ENCODE measurements at regions of chr13 and their contacts with region 1.

Region 1: DNA sequence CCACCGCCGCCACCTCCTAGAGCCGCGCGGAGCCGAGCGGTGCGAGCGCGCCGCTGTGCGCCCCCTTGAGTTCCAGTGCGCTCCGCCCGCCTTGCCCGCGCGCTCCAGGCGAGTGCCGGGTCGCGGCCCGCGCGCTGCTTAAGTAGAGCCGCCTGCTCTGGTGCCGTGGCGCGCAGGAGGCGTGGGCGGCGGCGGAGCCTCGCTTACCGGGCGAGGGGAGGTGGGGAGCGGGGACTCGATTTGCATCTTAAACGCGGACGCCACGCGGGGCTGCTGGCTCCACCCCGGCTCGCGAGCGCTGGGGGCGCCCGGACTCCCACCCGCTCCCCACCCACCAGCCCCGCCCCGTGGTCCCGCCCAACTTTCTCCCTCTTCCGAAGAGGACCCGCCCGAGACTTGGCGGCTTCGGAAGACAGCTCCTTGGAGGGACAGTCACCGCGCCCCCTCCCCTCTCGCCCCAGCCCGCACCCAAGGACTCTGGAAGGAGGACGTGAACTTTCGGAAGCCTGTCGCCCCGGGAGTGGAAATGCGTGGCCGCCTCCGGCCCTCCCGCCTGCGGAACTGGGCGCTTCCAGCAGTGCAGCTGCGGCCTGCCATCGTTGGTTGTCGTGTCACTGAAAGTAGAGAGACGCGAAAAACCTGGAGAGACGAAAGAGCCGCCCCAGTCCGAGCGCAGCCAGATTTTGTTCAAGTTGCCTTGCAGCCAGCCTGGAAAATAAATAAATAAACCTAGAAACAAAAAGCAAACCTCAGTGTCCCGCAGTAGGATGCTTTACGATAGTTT is at the start of gene KCTD12:
- DNase-seq: peak; percentile 49
- H3K4me3 Mint-ChIP-seq: peak within 1 kb of the TSS; percentile 62
- H3K27ac Mint-ChIP-seq: peak within 1 kb of the TSS; percentile 47
- H3K4me1 Mint-ChIP-seq: no peaks in the 10 kb centered on the region
- H3K27me3 Mint-ChIP-seq: no peaks in the 10 kb centered on the region
- CTCF ChIP-seq: no peak
- total RNA-seq, gene KCTD12: 2.8 and 3.7 TPM in 2 replicates

Region 2: DNA sequence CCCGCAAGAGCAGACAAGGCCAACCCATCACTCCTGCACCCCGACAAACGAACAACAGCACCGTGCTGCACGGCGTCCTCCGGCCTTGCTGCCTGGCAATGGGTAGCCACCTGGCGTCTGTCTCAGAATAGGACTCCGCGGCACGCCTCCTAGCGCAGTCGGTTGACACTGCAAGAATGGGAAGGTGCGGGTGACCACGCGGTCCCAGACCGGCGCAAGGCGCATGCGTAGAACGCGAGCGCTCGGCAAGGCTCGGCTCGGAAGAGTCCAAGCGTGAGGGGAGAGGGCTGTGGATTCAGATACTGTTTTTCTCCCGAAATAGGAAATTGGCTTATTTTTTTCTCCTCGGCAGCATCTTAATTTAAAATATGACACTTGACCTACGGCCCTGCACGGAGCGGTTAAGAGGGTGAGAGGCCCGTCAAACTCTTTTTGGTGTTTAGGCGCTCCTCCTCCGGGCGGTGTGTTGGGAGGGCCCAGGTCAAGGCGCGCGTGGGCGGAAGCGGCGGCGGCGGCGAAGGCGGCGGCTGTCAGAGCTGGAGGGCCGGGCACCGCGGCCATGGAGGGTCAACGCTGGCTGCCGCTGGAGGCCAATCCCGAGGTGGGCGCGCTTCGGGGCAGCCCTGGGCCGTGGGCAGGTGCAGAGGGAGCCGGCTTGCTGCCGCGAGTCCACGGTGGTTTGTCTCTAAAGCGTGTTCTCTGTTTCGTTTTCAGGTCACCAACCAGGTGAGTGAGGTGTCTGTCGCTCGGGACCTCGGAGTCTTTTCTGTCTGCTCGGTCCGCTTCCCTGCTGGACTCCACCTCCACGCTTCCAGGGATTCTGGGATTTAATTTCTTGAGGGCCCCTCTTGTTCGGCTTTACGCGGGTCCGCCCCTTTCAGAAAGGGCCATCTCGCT is 1337.0 kb before region 1 on chr13 and contains the start of gene UCHL3:
- CTCF ChIA-PET with region 1: interaction called, 11 read pairs
- intact Hi-C with region 1: no loop called
- DNase-seq: peak; percentile 87
- H3K4me3 Mint-ChIP-seq: peak within 1 kb of the TSS; percentile 96
- H3K27ac Mint-ChIP-seq: peak within 1 kb of the TSS; percentile 93
- H3K4me1 Mint-ChIP-seq: peaks cover 19% of the 10 kb centered on the region
- H3K27me3 Mint-ChIP-seq: no peaks in the 10 kb centered on the region
- CTCF ChIP-seq: peak; percentile 36
- total RNA-seq, gene UCHL3: 19.4 and 23.2 TPM in 2 replicates

Region 3: GRCh38 chr13:75870397-75870903 is 1016.0 kb before region 1 on chr13:
- CTCF ChIA-PET with region 1: no interaction called
- intact Hi-C with region 1: loop called (anchors 5 kb)
- DNase-seq: no peak
- H3K4me3 Mint-ChIP-seq: peak overlapping the region; percentile 66
- H3K27ac Mint-ChIP-seq: no peak overlapping the region
- H3K4me1 Mint-ChIP-seq: no peaks in the 10 kb centered on the region
- H3K27me3 Mint-ChIP-seq: no peaks in the 10 kb centered on the region
- CTCF ChIP-seq: no peak

Region 4: GRCh38 chr13:76723551-76724232 is 162.8 kb before region 1 on chr13:
- CTCF ChIA-PET with region 1: no interaction called
- intact Hi-C with region 1: no loop called
- DNase-seq: no peak
- H3K4me3 Mint-ChIP-seq: no peak overlapping the region
- H3K27ac Mint-ChIP-seq: no peak overlapping the region
- H3K4me1 Mint-ChIP-seq: no peaks in the 10 kb centered on the region
- H3K27me3 Mint-ChIP-seq: no peaks in the 10 kb centered on the region
- CTCF ChIP-seq: no peak

Region 5: GRCh38 chr13:77184455-77184854 is 298.0 kb after region 1 on chr13:
- CTCF ChIA-PET with region 1: no interaction called
- intact Hi-C with region 1: no loop called
- DNase-seq: no peak
- H3K4me3 Mint-ChIP-seq: no peak overlapping the region
- H3K27ac Mint-ChIP-seq: no peak overlapping the region
- H3K4me1 Mint-ChIP-seq: no peaks in the 10 kb centered on the region
- H3K27me3 Mint-ChIP-seq: no peaks in the 10 kb centered on the region
- CTCF ChIP-seq: no peak

Region 6: DNA sequence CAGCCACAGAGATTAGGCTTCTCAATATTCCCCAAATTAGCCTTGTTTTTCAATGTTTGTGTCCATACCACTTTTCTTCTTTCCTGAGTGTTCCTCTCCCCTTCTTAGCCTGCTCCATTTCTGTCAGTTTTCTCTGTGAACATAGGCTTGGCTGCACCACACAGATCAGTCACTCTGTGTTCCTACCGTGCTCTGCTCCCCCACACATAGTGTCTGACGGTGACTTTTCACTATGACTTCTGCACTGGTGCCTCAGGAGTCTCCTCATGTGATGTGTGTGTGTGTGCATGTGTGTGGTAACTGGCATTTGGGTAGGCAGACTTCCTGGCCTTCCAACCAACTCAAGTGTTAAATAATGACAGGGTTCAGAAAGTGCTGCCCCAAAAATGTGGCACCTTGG is 488.3 kb after region 1 on chr13:
- CTCF ChIA-PET with region 1: no interaction called
- intact Hi-C with region 1: no loop called
- DNase-seq: no peak
- H3K4me3 Mint-ChIP-seq: no peak overlapping the region
- H3K27ac Mint-ChIP-seq: no peak overlapping the region
- H3K4me1 Mint-ChIP-seq: no peaks in the 10 kb centered on the region
- H3K27me3 Mint-ChIP-seq: no peaks in the 10 kb centered on the region
- CTCF ChIP-seq: no peak